CD8-positive, alpha-beta T cell (primary cell): ENCODE measurements at regions of chr6 and their contacts with region 1.

Region 1: GRCh38 chr6:34189806-34190503 is 44.1 kb upstream of the GRM4 start:
- DNase-seq: peak in 8 of 9 experiments; percentile 46 to 78 (median 66)
- ATAC-seq: peak; percentile 65
- H3K4me3 ChIP-seq: no peak overlapping the region
- H3K4me3 Mint-ChIP-seq: no peak overlapping the region
- H3K27ac ChIP-seq: no peak overlapping the region
- H3K27ac Mint-ChIP-seq: no peak overlapping the region
- H3K4me1 ChIP-seq: peaks cover 7% of the 10 kb centered on the region
- H3K4me1 Mint-ChIP-seq: peaks cover 14% of the 10 kb centered on the region
- H3K27me3 ChIP-seq: no peaks in the 10 kb centered on the region
- H3K27me3 Mint-ChIP-seq: no peaks in the 10 kb centered on the region
- CTCF ChIP-seq: no peak

Region 2: DNA sequence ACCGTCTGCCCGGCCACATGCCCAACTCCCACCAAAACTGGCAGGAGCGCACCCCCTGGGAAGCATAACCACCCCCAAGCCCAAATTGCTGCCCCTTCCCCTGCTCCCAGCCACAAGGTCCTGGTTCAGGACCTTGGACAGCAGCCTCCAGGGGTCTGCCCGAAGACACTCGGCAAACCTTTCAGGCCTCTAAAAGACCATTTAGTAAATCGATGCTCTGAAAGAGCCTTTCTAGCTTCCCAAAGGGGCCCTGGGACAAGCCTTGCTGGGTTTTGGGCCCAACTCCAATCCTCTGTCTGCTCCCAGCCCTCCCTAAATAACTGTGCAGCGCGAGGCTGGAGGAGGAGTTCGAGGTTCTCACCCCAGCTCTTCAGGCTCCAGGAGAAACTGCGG is 74.6 kb before region 1 on chr6:
- CTCF ChIA-PET with region 1: no interaction called
- POLR2A ChIA-PET with region 1: no interaction called
- intact Hi-C with region 1: no loop called
- DNase-seq: peak in 3 of 9 experiments; percentile 13 to 44 (median 32)
- ATAC-seq: no peak
- H3K4me3 ChIP-seq: no peak overlapping the region
- H3K4me3 Mint-ChIP-seq: no peak overlapping the region
- H3K27ac ChIP-seq: no peak overlapping the region
- H3K27ac Mint-ChIP-seq: no peak overlapping the region
- H3K4me1 ChIP-seq: no peaks in the 10 kb centered on the region
- H3K4me1 Mint-ChIP-seq: peaks cover under 1% of the 10 kb centered on the region
- H3K27me3 ChIP-seq: no peaks in the 10 kb centered on the region
- H3K27me3 Mint-ChIP-seq: peaks cover 29% of the 10 kb centered on the region
- CTCF ChIP-seq: no peak

Region 3: GRCh38 chr6:34161857-34162515 is 28.0 kb before region 1 on chr6:
- CTCF ChIA-PET with region 1: interaction called, 37 read pairs
- POLR2A ChIA-PET with region 1: interaction called, 4 read pairs
- intact Hi-C with region 1: loop called (anchors 1 kb)
- DNase-seq: no peak
- ATAC-seq: no peak
- H3K4me3 ChIP-seq: no peak overlapping the region
- H3K4me3 Mint-ChIP-seq: no peak overlapping the region
- H3K27ac ChIP-seq: no peak overlapping the region
- H3K27ac Mint-ChIP-seq: no peak overlapping the region
- H3K4me1 ChIP-seq: no peaks in the 10 kb centered on the region
- H3K4me1 Mint-ChIP-seq: no peaks in the 10 kb centered on the region
- H3K27me3 ChIP-seq: no peaks in the 10 kb centered on the region
- H3K27me3 Mint-ChIP-seq: peaks cover 2% of the 10 kb centered on the region
- CTCF ChIP-seq: no peak